Gastrocnemius medialis (tissue), 4 donors: ENCODE measurements at regions of chr12 and their contacts with region 1.

Region 1: GRCh38 chr12:54958048-54958658 is 26.4 kb downstream of the TESPA1 start:
- DNase-seq: peak in 1 of 2 donors; percentile 16
- ATAC-seq: peak; percentile 33 to 56
- H3K4me3 ChIP-seq: no peak overlapping the region
- H3K27ac ChIP-seq: no peak overlapping the region
- H3K4me1 ChIP-seq: no peaks in the 10 kb centered on the region
- H3K27me3 ChIP-seq: no peaks in the 10 kb centered on the region
- CTCF ChIP-seq: peak; percentile 28 to 60 (median 49)
- POLR2A ChIP-seq: no peak

Region 2: GRCh38 chr12:54579696-54580333 is 378.3 kb before region 1 on chr12:
- in situ Hi-C with region 1: loop called in 2 of 4 experiments (anchors 25 kb)
- intact Hi-C with region 1: no loop called
- DNase-seq: peak; percentile 54 to 79
- ATAC-seq: peak; percentile 84 to 95
- H3K4me3 ChIP-seq: no peak overlapping the region
- H3K27ac ChIP-seq: peak overlapping the region in 2 of 4 donors; percentile 7 to 32
- H3K4me1 ChIP-seq: peaks cover 0 to 4% of the 10 kb centered on the region in 2 donors
- H3K27me3 ChIP-seq: no peaks in the 10 kb centered on the region
- CTCF ChIP-seq: peak; percentile 93 to 100 (median 97)
- POLR2A ChIP-seq: no peak

Region 3: DNA sequence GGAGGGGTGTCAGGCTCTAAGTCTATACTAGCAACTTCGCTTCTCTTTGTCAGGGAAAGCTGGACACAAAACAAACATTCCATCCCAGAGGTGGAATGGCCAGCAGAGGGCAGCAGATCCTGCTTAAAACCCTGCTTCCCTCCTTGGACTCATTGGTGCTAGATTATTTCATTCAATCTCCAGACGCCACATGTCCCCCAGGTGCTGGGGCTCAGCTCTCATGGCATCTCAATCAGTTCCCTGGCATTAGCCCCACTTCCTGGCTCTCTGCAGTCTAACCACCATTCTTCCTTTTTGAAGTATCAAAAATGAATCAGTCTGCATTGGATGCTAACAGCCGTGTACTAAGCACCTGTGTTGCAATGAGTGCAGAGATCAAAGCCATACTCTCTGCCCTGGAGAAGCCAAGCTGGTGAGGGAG is 361.6 kb before region 1 on chr12:
- in situ Hi-C with region 1: loop called (anchors 5 to 25 kb)
- intact Hi-C with region 1: no loop called
- DNase-seq: peak in 1 of 2 donors; percentile 48
- ATAC-seq: peak; percentile 75 to 88
- H3K4me3 ChIP-seq: no peak overlapping the region
- H3K27ac ChIP-seq: no peak overlapping the region
- H3K4me1 ChIP-seq: peaks cover 0 to 1% of the 10 kb centered on the region in 2 donors
- H3K27me3 ChIP-seq: no peaks in the 10 kb centered on the region
- CTCF ChIP-seq: peak; percentile 65 to 81 (median 70)
- POLR2A ChIP-seq: no peak

Region 4: GRCh38 chr12:54603173-54603814 is 354.9 kb before region 1 on chr12:
- in situ Hi-C with region 1: loop called (anchors 5 to 25 kb)
- intact Hi-C with region 1: loop called (anchors 2 kb)
- DNase-seq: peak; percentile 32 to 45
- ATAC-seq: peak; percentile 75 to 90
- H3K4me3 ChIP-seq: no peak overlapping the region
- H3K27ac ChIP-seq: no peak overlapping the region
- H3K4me1 ChIP-seq: no peaks in the 10 kb centered on the region
- H3K27me3 ChIP-seq: no peaks in the 10 kb centered on the region
- CTCF ChIP-seq: peak; percentile 38 to 81 (median 54)
- POLR2A ChIP-seq: no peak

Region 5: GRCh38 chr12:54749191-54749818 is 208.8 kb before region 1 on chr12:
- in situ Hi-C with region 1: loop called in 3 of 4 experiments (anchors 25 kb)
- intact Hi-C with region 1: loop called (anchors 10 kb)
- DNase-seq: no peak
- ATAC-seq: no peak
- H3K4me3 ChIP-seq: no peak overlapping the region
- H3K27ac ChIP-seq: no peak overlapping the region
- H3K4me1 ChIP-seq: no peaks in the 10 kb centered on the region
- H3K27me3 ChIP-seq: peaks cover 0 to 5% (median 0%) of the 10 kb centered on the region in 3 donors
- CTCF ChIP-seq: peak; percentile 42 to 66 (median 46)
- POLR2A ChIP-seq: no peak

Region 6: GRCh38 chr12:54759751-54760150 is 198.4 kb before region 1 on chr12:
- in situ Hi-C with region 1: no loop called
- intact Hi-C with region 1: loop called (anchors 10 kb)
- DNase-seq: no peak
- ATAC-seq: no peak
- H3K4me3 ChIP-seq: no peak overlapping the region
- H3K27ac ChIP-seq: no peak overlapping the region
- H3K4me1 ChIP-seq: no peaks in the 10 kb centered on the region
- H3K27me3 ChIP-seq: no peaks in the 10 kb centered on the region
- CTCF ChIP-seq: no peak
- POLR2A ChIP-seq: no peak

Region 7: DNA sequence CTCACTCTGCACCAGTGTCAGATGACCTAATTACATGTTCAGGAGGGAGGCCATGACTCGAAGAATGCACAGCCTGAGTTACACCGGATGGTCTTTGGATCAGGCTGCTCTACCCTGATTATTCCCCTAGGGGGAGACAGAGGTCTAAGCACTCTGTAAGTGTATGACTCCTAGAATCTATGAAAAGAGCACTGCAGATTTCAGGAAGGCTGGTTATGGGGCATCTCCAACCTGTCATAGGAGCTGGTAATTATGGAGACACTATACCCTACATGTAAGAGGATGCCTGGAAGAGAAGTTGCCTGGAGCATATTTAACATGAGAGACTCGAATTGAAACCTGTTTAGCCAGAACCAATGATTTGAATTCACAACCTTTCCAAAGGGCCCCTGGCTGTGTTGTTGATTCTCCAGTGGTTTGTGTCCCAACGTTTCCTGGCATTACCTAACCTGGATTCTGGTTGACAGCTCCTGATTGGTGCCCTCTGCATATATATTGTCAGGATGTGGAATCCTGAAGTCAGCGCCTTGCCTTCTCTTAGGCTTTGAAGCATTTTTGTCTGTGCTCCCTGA is 104.1 kb before region 1 on chr12 and contains the start of gene MUCL1:
- in situ Hi-C with region 1: loop called in 1 of 4 experiments (anchors 5 kb)
- intact Hi-C with region 1: no loop called
- DNase-seq: no peak
- ATAC-seq: no peak
- H3K4me3 ChIP-seq: no peak within 1 kb of the TSS
- H3K27ac ChIP-seq: no peak within 1 kb of the TSS
- H3K4me1 ChIP-seq: no peaks in the 10 kb centered on the region
- H3K27me3 ChIP-seq: no peaks in the 10 kb centered on the region
- CTCF ChIP-seq: peak in 4 of 5 experiments; percentile 23 to 47 (median 24)
- POLR2A ChIP-seq: no peak
- total RNA-seq, gene MUCL1: not detected